H1 (cell line): ENCODE measurements at regions of chr12 and their contacts with region 1.

Region 1: GRCh38 chr12:74816398-74817168 is 278.9 kb downstream of the ATXN7L3B start:
- DNase-seq: no peak
- H3K4me3 ChIP-seq: no peak overlapping the region
- H3K27ac ChIP-seq: no peak overlapping the region
- H3K4me1 ChIP-seq: no peaks in the 10 kb centered on the region
- H3K27me3 ChIP-seq: no peaks in the 10 kb centered on the region
- CTCF ChIP-seq: no peak
- EP300 ChIP-seq: no peak
- POLR2A ChIP-seq: no peak
- RAD21 ChIP-seq: no peak

Region 2: DNA sequence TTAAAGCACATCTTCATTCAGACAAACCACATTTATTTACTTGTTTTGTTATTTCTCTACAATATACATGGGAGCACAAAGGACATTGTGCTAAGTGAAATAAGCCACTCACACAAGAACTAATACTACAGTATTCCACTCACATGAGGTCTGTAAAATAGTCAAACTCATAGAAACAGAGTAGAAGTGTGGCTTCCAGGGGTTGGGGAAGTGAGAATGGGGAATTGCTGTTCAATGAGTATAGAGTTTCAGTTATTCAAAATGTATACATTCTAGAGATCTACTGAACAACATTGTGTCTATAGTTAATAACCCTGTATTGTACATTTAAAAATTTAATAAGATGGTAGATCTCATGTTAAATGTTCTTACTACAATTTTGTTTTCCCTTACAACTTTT is 190.2 kb before region 1 on chr12:
- CTCF ChIA-PET with region 1: no interaction called
- POLR2A ChIA-PET with region 1: no interaction called
- DNase-seq: no peak
- H3K4me3 ChIP-seq: no peak overlapping the region
- H3K27ac ChIP-seq: no peak overlapping the region
- H3K4me1 ChIP-seq: no peaks in the 10 kb centered on the region
- H3K27me3 ChIP-seq: no peaks in the 10 kb centered on the region
- CTCF ChIP-seq: no peak
- EP300 ChIP-seq: no peak
- POLR2A ChIP-seq: no peak
- RAD21 ChIP-seq: no peak

Region 3: GRCh38 chr12:74801625-74802024 is 15.0 kb before region 1 on chr12:
- CTCF ChIA-PET with region 1: interaction called, 14 read pairs
- POLR2A ChIA-PET with region 1: no interaction called
- DNase-seq: no peak
- H3K4me3 ChIP-seq: no peak overlapping the region
- H3K27ac ChIP-seq: no peak overlapping the region
- H3K4me1 ChIP-seq: no peaks in the 10 kb centered on the region
- H3K27me3 ChIP-seq: no peaks in the 10 kb centered on the region
- CTCF ChIP-seq: no peak
- EP300 ChIP-seq: no peak
- POLR2A ChIP-seq: no peak
- RAD21 ChIP-seq: no peak